ENCODE measurements at regions of chr20 and their contacts with region 1.

Region 1: DNA sequence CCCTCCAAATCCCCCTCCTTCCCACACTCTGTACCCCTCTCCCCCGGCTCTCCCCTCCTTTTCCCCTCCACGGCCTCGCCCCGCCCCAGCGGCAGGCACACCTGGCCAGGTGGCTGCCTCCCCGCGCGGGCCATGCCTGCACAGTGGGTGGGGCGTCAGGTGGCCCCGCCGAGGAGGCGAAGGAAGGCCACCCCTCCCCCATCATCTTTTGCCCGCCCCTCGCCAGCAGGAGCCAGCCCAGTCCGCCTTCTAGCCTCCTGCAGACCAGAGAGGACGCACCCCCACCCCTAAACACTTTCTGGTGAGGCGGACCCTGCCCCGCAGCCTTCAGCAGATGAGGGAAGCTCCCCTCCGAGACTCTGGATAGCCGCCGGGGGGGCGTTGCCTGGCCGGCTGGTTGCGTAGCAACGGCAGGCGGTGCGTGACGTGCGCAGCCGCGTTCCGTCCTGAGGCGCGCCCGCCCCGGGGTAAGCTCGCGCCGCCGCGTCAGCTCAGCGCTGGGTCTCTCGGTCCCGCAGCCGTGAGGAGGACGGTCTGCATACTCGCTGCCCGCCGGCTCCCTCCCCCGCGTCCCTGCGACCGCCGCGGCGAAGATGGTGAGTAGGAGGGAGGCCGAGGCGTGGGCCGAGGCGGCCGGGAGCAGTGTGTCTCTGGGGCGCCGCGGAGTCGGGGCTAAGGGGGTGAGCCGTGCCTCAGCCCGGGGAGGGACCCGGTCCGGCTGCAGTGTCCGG is at the start of gene DSTN:
- DNase-seq: peak; percentile 83 to 91 (median 89)
- ATAC-seq: peak; percentile 95
- H3K4me3 ChIP-seq: peak within 1 kb of the TSS; percentile 94
- H3K4me3 Mint-ChIP-seq: peak within 1 kb of the TSS; percentile 82 to 97 (median 95)
- H3K27ac ChIP-seq: peak within 1 kb of the TSS; percentile 85
- H3K27ac Mint-ChIP-seq: peak within 1 kb of the TSS; percentile 80 to 96 (median 91)
- H3K4me1 ChIP-seq: peaks cover 5 to 11% of the 10 kb centered on the region in 2 donors
- H3K4me1 Mint-ChIP-seq: peaks cover 17 to 44% (median 31%) of the 10 kb centered on the region in 7 donors
- H3K27me3 ChIP-seq: no peaks in the 10 kb centered on the region
- H3K27me3 Mint-ChIP-seq: peaks cover 0 to 14% (median 0%) of the 10 kb centered on the region in 5 donors
- total RNA-seq, gene DSTN: 28.7 to 63.6 (median 33.9) TPM

Region 2: GRCh38 chr20:16573001-16573965 is 996.5 kb before region 1 on chr20 and contains the start of gene KIF16B:
- CTCF ChIA-PET with region 1: no interaction called
- POLR2A ChIA-PET with region 1: no interaction called
- intact Hi-C with region 1: loop called in 1 of 2 experiments (anchors 2 kb)
- DNase-seq: peak; percentile 62 to 97 (median 76)
- ATAC-seq: peak; percentile 88
- H3K4me3 ChIP-seq: peak within 1 kb of the TSS; percentile 78
- H3K4me3 Mint-ChIP-seq: peak within 1 kb of the TSS; percentile 88 to 97 (median 92)
- H3K27ac ChIP-seq: peak within 1 kb of the TSS; percentile 61
- H3K27ac Mint-ChIP-seq: peak within 1 kb of the TSS; percentile 52 to 90 (median 85)
- H3K4me1 ChIP-seq: peaks cover 9 to 11% of the 10 kb centered on the region in 2 donors
- H3K4me1 Mint-ChIP-seq: peaks cover 16 to 61% (median 50%) of the 10 kb centered on the region in 7 donors
- H3K27me3 ChIP-seq: no peaks in the 10 kb centered on the region
- H3K27me3 Mint-ChIP-seq: peaks cover 0 to 8% (median 0%) of the 10 kb centered on the region in 5 donors
- total RNA-seq, gene KIF16B: 8.4 to 13.7 (median 11.0) TPM

Region 3: GRCh38 chr20:17558154-17558940 is 11.4 kb before region 1 on chr20:
- CTCF ChIA-PET with region 1: no interaction called
- POLR2A ChIA-PET with region 1: interaction called, 4 read pairs
- intact Hi-C with region 1: loop called in 1 of 2 experiments (anchors 1 kb)
- DNase-seq: peak in 1 of 9 donors; percentile 59
- ATAC-seq: peak; percentile 46
- H3K4me3 ChIP-seq: no peak overlapping the region
- H3K4me3 Mint-ChIP-seq: no peak overlapping the region
- H3K27ac ChIP-seq: no peak overlapping the region
- H3K27ac Mint-ChIP-seq: peak overlapping the region in 1 of 9 donors; percentile 74
- H3K4me1 ChIP-seq: no peaks in the 10 kb centered on the region
- H3K4me1 Mint-ChIP-seq: peaks cover 0 to 24% (median 0%) of the 10 kb centered on the region in 7 donors
- H3K27me3 ChIP-seq: no peaks in the 10 kb centered on the region
- H3K27me3 Mint-ChIP-seq: no peaks in the 10 kb centered on the region

Region 4: GRCh38 chr20:17611540-17612286 is 41.9 kb after region 1 on chr20:
- CTCF ChIA-PET with region 1: interaction called, 11 read pairs
- POLR2A ChIA-PET with region 1: interaction called, 31 read pairs
- intact Hi-C with region 1: loop called (anchors 1 kb)
- DNase-seq: peak in 4 of 9 donors; percentile 7 to 30 (median 20)
- ATAC-seq: no peak
- H3K4me3 ChIP-seq: peak overlapping the region; percentile 36
- H3K4me3 Mint-ChIP-seq: peak overlapping the region in 8 of 10 donors; percentile 23 to 85 (median 68)
- H3K27ac ChIP-seq: peak overlapping the region; percentile 60
- H3K27ac Mint-ChIP-seq: peak overlapping the region; percentile 85 to 98 (median 95)
- H3K4me1 ChIP-seq: peaks cover 39 to 40% of the 10 kb centered on the region in 2 donors
- H3K4me1 Mint-ChIP-seq: peaks cover 20 to 53% (median 40%) of the 10 kb centered on the region in 7 donors
- H3K27me3 ChIP-seq: no peaks in the 10 kb centered on the region
- H3K27me3 Mint-ChIP-seq: no peaks in the 10 kb centered on the region

Region 5: DNA sequence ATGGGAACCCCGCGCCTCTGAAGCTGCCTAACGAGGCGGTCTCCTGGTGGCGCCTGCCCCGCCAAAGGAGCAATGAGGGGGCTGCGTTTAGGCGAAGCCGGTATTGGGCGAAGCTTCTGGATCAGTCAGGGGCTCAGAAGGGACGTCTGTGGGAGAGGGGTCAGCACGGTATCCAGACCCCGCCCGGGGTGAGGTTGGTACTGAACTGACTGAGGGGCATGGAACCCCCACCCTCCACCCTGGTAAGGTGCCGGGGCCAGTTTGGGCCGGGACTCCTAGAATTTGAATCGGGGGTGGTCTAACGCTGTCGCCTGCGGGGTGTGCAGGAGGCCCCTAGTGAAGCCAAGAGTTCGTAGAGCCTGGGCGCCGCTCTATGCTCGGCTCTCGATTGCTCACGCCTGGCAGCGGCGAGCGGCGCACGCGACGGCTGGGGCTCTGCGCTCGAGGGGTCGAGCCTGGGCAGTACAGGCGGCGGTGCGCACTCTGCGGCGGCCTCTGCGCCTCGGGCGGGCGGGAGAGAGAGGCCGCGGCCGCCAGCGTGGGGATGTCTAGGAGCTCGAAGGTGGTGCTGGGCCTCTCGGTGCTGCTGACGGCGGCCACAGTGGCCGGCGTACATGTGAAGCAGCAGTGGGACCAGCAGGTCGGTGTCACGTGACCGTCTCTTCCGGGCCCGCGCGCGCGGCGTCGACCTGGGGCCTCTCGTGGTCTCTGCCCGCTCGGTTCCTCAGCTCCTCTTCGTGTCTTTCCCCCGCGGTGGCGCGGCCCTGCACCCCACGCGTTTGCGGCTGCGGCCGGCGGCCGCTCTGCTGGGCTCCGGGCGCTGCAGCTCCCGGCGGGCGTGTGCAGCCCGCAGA is 567.9 kb after region 1 on chr20 and contains the starts of genes KAT14 and PET117:
- CTCF ChIA-PET with region 1: interaction called, 4 read pairs
- POLR2A ChIA-PET with region 1: no interaction called
- intact Hi-C with region 1: loop called (anchors 1 to 2 kb)
- DNase-seq: peak; percentile 85 to 96 (median 93)
- ATAC-seq: peak; percentile 98
- H3K4me3 ChIP-seq: peak within 1 kb of the TSS; percentile 99
- H3K4me3 Mint-ChIP-seq: peak within 1 kb of the TSS; percentile 76 to 92 (median 88)
- H3K27ac ChIP-seq: peak within 1 kb of the TSS; percentile 89
- H3K27ac Mint-ChIP-seq: peak within 1 kb of the TSS; percentile 85 to 95 (median 92)
- H3K4me1 ChIP-seq: peaks cover 13 to 15% of the 10 kb centered on the region in 2 donors
- H3K4me1 Mint-ChIP-seq: peaks cover 23 to 44% (median 31%) of the 10 kb centered on the region in 7 donors
- H3K27me3 ChIP-seq: no peaks in the 10 kb centered on the region
- H3K27me3 Mint-ChIP-seq: peaks cover 0 to 7% (median 0%) of the 10 kb centered on the region in 5 donors
- total RNA-seq, gene KAT14: 12.3 to 26.7 (median 16.2) TPM
- total RNA-seq, gene PET117: 9.0 to 20.3 (median 11.7) TPM

Measured in naive thymus-derived CD4-positive, alpha-beta T cell (primary cell).